Activated B cell treated with CpG ODN at 0.5 μM for 24 hours (primary cell): ENCODE measurements at regions of chr10 and their contacts with region 1.

Region 1: GRCh38 chr10:93702211-93703001 is at the start of gene FRA10AC1:
- DNase-seq: peak; percentile 87
- ATAC-seq: peak; percentile 88
- H3K4me3 Mint-ChIP-seq: no peak within 1 kb of the TSS
- H3K27ac Mint-ChIP-seq: no peak within 1 kb of the TSS
- H3K4me1 Mint-ChIP-seq: peaks cover 11% of the 10 kb centered on the region
- H3K27me3 Mint-ChIP-seq: no peaks in the 10 kb centered on the region
- CTCF ChIP-seq: no peak
- total RNA-seq, gene FRA10AC1: 20.3 and 24.8 TPM in 2 replicates

Region 2: DNA sequence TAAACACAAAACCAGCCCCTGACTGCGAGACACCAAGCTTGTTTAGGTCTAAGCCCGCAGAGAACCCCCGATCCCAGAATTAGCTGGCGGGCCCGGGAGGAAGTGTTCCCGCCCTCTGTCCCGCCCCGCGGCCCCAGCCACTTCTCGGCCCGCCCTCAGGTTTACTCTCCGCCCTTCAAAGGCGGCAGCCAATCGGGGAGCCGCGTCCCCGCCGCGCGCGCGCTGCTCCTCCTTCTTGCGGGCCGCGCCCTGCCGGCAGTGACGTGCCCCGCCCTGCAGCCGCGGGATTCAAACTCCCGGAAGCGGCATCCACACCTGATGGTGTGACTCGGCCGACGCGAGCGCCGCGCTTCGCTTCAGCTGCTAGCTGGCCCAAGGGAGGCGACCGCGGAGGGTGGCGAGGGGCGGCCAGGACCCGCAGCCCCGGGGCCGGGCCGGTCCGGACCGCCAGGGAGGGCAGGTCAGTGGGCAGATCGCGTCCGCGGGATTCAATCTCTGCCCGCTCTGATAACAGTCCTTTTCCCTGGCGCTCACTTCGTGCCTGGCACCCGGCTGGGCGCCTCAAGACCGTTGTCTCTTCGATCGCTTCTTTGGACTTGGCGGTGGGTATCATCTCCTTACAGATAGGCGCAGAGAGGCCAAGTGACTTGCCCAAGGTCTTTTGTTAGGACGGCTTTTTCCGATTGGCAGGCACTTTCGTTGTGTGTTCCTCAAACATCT is 205.9 kb before region 1 on chr10 and contains the start of gene CEP55:
- CTCF ChIA-PET with region 1: no interaction called
- POLR2A ChIA-PET with region 1: no interaction called
- intact Hi-C with region 1: loop called (anchors 1 kb)
- DNase-seq: peak; percentile 94
- ATAC-seq: peak; percentile 100
- H3K4me3 Mint-ChIP-seq: peak within 1 kb of the TSS; percentile 92
- H3K27ac Mint-ChIP-seq: peak within 1 kb of the TSS; percentile 74
- H3K4me1 Mint-ChIP-seq: peaks cover 16% of the 10 kb centered on the region
- H3K27me3 Mint-ChIP-seq: no peaks in the 10 kb centered on the region
- CTCF ChIP-seq: no peak
- total RNA-seq, gene CEP55: 0.95 and 1.6 TPM in 2 replicates

Region 3: DNA sequence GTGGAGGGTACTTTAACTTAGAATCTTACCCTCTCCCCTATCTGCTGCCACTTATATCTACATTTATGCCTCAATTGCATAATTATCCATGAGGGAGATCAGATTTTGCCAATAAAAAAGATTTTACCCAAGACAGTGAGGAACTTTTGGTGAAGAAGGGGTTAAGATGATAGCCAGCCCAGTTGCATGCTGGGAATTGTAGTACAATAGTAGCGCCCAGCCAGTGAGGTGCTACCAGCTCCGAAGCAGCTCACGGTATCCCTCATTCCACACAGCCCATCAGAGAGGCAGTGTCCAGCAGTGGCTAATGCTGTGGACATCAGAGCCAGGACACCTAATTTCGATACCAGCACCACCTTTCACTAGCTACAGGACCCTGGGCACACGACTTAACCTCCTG is 49.4 kb after region 1 on chr10:
- CTCF ChIA-PET with region 1: interaction called, 4 read pairs
- POLR2A ChIA-PET with region 1: interaction called, 8 read pairs
- intact Hi-C with region 1: loop called (anchors 1 kb)
- DNase-seq: no peak
- ATAC-seq: peak; percentile 68
- H3K4me3 Mint-ChIP-seq: peak overlapping the region; percentile 56
- H3K27ac Mint-ChIP-seq: no peak overlapping the region
- H3K4me1 Mint-ChIP-seq: peaks cover 8% of the 10 kb centered on the region
- H3K27me3 Mint-ChIP-seq: peaks cover 33% of the 10 kb centered on the region
- CTCF ChIP-seq: no peak

Region 4: GRCh38 chr10:93893646-93894515 is 191.5 kb after region 1 on chr10 and contains the start of gene SLC35G1:
- CTCF ChIA-PET with region 1: no interaction called
- POLR2A ChIA-PET with region 1: no interaction called
- intact Hi-C with region 1: loop called (anchors 1 kb)
- DNase-seq: peak; percentile 57
- ATAC-seq: peak; percentile 93
- H3K4me3 Mint-ChIP-seq: peak within 1 kb of the TSS; percentile 84
- H3K27ac Mint-ChIP-seq: peak within 1 kb of the TSS; percentile 55
- H3K4me1 Mint-ChIP-seq: peaks cover 13% of the 10 kb centered on the region
- H3K27me3 Mint-ChIP-seq: peaks cover 12% of the 10 kb centered on the region
- CTCF ChIP-seq: no peak
- total RNA-seq, gene SLC35G1: 2.1 and 2.2 TPM in 2 replicates

Region 5: DNA sequence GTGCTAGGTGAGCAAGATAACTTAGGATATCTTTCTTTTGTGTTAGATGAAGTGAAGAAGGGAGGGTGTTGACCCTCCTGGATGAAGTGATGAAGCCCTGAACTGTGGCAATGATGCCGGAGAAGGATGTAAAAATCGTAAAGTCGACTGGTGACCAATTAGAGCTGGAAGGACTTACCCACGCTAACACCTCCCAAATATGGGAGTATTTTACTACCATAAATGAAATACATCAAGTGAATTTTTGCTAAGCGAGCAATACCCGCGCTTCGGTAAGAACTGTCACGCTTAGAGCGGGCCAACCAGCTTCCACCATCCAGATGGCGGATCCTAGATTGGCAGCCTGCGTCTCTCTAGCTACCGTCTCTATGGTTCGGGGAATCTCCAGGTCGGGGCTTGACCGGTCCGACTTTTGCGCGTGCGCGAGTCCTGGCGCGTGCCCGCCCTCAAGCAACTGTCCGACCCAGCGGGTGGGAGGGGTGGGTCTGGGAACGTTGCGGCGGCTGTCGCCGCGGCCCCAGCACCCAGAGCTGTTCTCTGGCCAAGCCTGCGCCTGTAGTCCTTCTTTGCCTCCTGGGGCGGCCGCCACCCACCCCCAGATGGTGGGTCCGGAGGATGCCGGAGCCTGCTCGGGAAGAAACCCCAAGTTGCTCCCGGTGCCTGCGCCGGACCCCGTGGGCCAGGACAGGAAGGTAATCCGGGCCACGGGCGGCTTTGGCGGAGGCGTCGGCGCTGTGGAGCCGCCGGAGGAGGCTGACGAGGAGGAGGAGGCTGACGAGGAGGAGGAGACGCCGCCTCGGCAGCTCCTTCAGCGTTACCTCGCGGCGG is 699.8 kb after region 1 on chr10 and contains the start of gene TBC1D12:
- CTCF ChIA-PET with region 1: no interaction called
- POLR2A ChIA-PET with region 1: interaction called, 7 read pairs
- intact Hi-C with region 1: loop called (anchors 5 kb)
- DNase-seq: peak; percentile 56
- ATAC-seq: peak; percentile 54
- H3K4me3 Mint-ChIP-seq: peak within 1 kb of the TSS; percentile 88
- H3K27ac Mint-ChIP-seq: peak within 1 kb of the TSS; percentile 83
- H3K4me1 Mint-ChIP-seq: peaks cover 15% of the 10 kb centered on the region
- H3K27me3 Mint-ChIP-seq: peaks cover 19% of the 10 kb centered on the region
- CTCF ChIP-seq: no peak
- total RNA-seq, gene TBC1D12: 6.1 and 7.0 TPM in 2 replicates